ENCODE measurements at regions of chr2 and their contacts with region 1.

Region 1: GRCh38 chr2:136344339-136344738 is 226.4 kb upstream of the CXCR4 start:
- DNase-seq: no peak
- ATAC-seq: no peak
- H3K4me3 Mint-ChIP-seq: no peak overlapping the region
- H3K27ac Mint-ChIP-seq: no peak overlapping the region
- H3K4me1 Mint-ChIP-seq: no peaks in the 10 kb centered on the region
- H3K27me3 Mint-ChIP-seq: no peaks in the 10 kb centered on the region
- CTCF ChIP-seq: no peak

Region 2: DNA sequence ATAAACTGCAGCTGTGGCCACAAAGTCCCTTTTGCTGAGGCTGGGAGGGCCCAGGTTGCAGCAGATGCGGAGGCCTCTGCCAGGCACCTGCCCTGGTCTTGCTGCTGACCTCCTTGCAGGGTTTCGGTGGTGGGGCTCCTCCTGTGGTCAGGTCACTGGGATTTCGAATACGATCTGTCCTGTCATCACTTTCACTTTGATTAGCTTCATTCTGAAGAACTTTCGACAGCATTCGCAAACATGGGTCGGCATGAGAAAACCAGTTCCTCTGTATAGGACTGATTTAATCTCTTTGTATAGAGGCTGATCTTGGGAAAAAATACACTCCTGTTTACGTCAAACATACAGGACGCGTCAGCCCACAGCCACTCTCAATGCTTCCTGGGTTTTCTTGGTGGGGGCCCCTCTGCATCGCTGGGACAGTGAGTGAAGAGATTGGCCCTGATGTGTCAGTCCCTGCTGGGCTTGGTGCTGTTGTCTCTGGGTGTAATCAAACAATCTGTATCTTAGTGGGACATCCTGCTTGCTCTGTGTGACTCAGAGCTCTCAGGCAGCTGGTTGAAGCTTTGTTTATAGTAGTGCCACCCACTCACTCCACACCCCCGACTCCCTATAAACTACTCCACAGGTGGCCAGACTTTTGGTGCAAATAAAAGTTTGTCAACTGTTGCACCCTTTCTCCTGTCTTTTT is 17.0 kb before region 1 on chr2:
- CTCF ChIA-PET with region 1: no interaction called
- POLR2A ChIA-PET with region 1: no interaction called
- intact Hi-C with region 1: loop called (anchors 2 kb)
- DNase-seq: no peak
- ATAC-seq: peak; percentile 78
- H3K4me3 Mint-ChIP-seq: peak overlapping the region; percentile 60
- H3K27ac Mint-ChIP-seq: peak overlapping the region; percentile 85
- H3K4me1 Mint-ChIP-seq: peaks cover 56% of the 10 kb centered on the region
- H3K27me3 Mint-ChIP-seq: no peaks in the 10 kb centered on the region
- CTCF ChIP-seq: no peak

Region 3: GRCh38 chr2:136362676-136363390 is 18.5 kb after region 1 on chr2:
- CTCF ChIA-PET with region 1: no interaction called
- POLR2A ChIA-PET with region 1: no interaction called
- intact Hi-C with region 1: loop called (anchors 1 kb)
- DNase-seq: no peak
- ATAC-seq: peak; percentile 92
- H3K4me3 Mint-ChIP-seq: no peak overlapping the region
- H3K27ac Mint-ChIP-seq: peak overlapping the region; percentile 2
- H3K4me1 Mint-ChIP-seq: peaks cover 23% of the 10 kb centered on the region
- H3K27me3 Mint-ChIP-seq: no peaks in the 10 kb centered on the region
- CTCF ChIP-seq: no peak

Region 4: DNA sequence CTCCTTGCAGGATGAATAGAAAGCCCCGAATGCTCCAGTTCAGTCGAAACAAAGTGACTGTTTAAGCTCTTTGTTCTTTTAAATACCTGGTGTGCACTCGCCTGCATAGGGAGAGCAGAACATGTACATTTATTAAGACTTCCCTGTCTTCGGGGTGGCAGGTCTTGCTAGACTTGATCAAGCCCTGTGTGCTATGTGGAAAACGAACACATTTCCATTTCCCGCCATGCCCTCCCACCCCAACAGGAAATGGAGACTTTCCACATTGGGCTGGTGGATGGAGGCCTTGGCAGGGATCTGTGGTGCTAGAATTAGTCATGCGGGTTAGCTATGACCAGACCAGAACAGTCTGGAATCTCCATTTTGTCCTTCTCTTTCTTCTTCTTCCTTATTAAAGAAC is 100.0 kb after region 1 on chr2:
- CTCF ChIA-PET with region 1: no interaction called
- POLR2A ChIA-PET with region 1: no interaction called
- intact Hi-C with region 1: no loop called
- DNase-seq: no peak
- ATAC-seq: no peak
- H3K4me3 Mint-ChIP-seq: no peak overlapping the region
- H3K27ac Mint-ChIP-seq: no peak overlapping the region
- H3K4me1 Mint-ChIP-seq: no peaks in the 10 kb centered on the region
- H3K27me3 Mint-ChIP-seq: peaks cover 4% of the 10 kb centered on the region
- CTCF ChIP-seq: no peak

Region 5: GRCh38 chr2:136818839-136819238 is 474.5 kb after region 1 on chr2:
- CTCF ChIA-PET with region 1: no interaction called
- POLR2A ChIA-PET with region 1: no interaction called
- intact Hi-C with region 1: no loop called
- DNase-seq: no peak
- ATAC-seq: no peak
- H3K4me3 Mint-ChIP-seq: no peak overlapping the region
- H3K27ac Mint-ChIP-seq: no peak overlapping the region
- H3K4me1 Mint-ChIP-seq: no peaks in the 10 kb centered on the region
- H3K27me3 Mint-ChIP-seq: no peaks in the 10 kb centered on the region
- CTCF ChIP-seq: no peak

Measured in activated B cell treated with CpG ODN at 0.5 μM for 24 hours (primary cell).